ENCODE measurements at regions of chr12 and their contacts with region 1.

Region 1: DNA sequence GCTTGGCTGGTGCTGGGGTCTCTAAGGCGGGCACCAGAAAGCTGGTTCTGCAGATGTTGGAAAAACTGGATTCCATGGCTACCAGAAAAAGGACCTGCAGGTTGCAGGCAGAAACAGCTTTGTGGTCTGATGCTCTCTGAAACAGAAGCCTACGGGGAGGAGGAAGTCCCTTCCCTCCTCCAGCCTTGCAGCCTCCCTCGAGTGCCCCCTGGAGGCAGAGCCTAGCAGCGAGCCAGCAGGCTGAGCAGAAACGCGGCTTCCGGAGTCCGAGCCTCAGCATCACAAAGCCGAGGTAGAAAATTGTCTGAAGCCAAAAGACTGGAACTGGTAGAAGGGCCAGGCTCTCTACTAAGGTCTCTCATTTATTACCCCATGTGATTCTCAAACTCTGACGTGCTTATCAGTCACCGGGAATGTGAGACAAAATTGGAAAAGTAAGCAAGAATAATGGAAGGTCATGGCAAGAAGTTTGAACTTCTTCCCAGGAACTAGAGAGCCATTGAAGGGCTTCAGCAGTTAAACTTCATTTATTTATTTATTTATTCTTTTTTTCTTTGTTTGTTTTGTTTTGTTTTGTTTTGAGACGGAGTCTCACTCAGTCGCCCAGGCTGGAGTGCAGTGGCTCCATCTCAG is 82.2 kb upstream of the CPSF6 start:
- DNase-seq: peak; percentile 97
- ATAC-seq: peak; percentile 83
- H3K4me3 Mint-ChIP-seq: peak overlapping the region; percentile 42
- H3K27ac Mint-ChIP-seq: peak overlapping the region; percentile 58
- H3K4me1 Mint-ChIP-seq: peaks cover 55% of the 10 kb centered on the region
- H3K27me3 Mint-ChIP-seq: no peaks in the 10 kb centered on the region

Region 2: GRCh38 chr12:69239352-69239921 is 82.3 kb after region 1 on chr12 and contains the start of gene CPSF6:
- CTCF ChIA-PET with region 1: interaction called, 30 read pairs
- POLR2A ChIA-PET with region 1: no interaction called
- intact Hi-C with region 1: loop called (anchors 1 kb)
- DNase-seq: peak; percentile 99
- ATAC-seq: peak; percentile 90
- H3K4me3 Mint-ChIP-seq: peak within 1 kb of the TSS; percentile 100
- H3K27ac Mint-ChIP-seq: peak within 1 kb of the TSS; percentile 99
- H3K4me1 Mint-ChIP-seq: peaks cover 48% of the 10 kb centered on the region
- H3K27me3 Mint-ChIP-seq: no peaks in the 10 kb centered on the region
- total RNA-seq, gene CPSF6: 107 to 109 TPM

Region 3: DNA sequence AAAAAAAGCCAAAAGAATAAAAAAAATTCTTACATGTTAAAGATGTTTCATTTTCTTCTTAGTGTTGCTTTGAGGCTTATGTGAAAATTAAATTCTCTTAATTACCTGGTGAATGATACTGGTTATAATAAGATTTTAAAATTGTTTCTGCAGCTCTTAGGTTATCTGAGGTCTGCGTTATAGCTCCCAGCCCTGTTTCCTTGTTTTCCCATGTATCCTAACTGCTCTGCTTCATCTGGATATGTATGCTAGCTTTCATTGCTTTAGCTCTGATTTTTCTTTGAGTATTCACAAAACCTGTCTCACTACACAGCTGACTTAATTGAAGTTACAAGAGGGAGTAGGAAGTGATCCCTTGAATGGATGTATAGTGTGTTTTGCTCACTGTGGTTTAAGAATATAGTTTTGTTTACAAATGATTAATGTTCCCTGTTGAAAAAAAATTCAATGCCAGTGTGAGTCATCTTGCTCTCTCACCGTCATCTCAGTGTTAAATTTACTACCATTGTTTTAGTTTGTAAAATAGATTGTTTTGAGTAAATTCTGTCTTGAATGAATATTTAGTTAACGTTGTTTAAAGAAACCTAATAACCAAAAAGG is 109.0 kb after region 1 on chr12:
- CTCF ChIA-PET with region 1: interaction called, 26 read pairs
- POLR2A ChIA-PET with region 1: no interaction called
- intact Hi-C with region 1: no loop called
- DNase-seq: no peak
- ATAC-seq: peak; percentile 68
- H3K4me3 Mint-ChIP-seq: no peak overlapping the region
- H3K27ac Mint-ChIP-seq: peak overlapping the region; percentile 1
- H3K4me1 Mint-ChIP-seq: peaks cover 16% of the 10 kb centered on the region
- H3K27me3 Mint-ChIP-seq: no peaks in the 10 kb centered on the region

Region 4: GRCh38 chr12:69470189-69471075 is 313.3 kb after region 1 on chr12 and contains the start of gene FRS2:
- CTCF ChIA-PET with region 1: no interaction called
- POLR2A ChIA-PET with region 1: no interaction called
- intact Hi-C with region 1: loop called in 1 of 2 experiments (anchors 5 kb)
- DNase-seq: peak; percentile 93
- ATAC-seq: peak; percentile 99
- H3K4me3 Mint-ChIP-seq: peak within 1 kb of the TSS; percentile 92
- H3K27ac Mint-ChIP-seq: peak within 1 kb of the TSS; percentile 99
- H3K4me1 Mint-ChIP-seq: peaks cover 52% of the 10 kb centered on the region
- H3K27me3 Mint-ChIP-seq: no peaks in the 10 kb centered on the region
- total RNA-seq, gene FRS2: 9.5 to 10.4 TPM

Region 5: DNA sequence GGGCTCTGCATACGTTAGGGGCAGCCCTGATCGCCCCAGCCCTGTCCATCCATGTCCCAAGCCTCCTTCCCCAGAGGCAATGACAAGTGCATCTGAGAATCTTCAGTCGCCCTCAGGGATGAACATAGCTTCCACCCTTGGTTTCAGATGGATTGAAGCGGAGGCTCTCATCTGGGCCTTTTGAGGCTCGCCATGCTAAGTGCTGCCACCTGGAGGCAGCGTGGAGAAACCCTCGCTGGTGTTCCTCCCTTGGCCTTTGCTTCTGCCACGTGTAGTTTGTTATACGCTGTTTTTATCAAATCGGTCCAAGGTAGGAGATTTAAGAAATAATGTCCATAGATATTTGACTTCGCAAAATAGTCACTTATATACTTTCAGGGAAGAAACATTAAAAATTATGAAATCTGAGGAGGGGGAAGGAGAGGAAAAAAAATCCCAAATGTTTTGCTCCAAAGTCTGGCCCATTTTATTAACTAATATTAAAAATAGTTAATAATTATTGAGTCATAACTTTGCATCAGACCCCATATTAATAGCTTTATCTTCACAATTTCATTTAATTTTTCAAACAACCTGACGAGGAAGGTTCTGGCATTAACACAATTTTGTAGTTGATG is 482.4 kb after region 1 on chr12:
- CTCF ChIA-PET with region 1: interaction called, 3 read pairs
- POLR2A ChIA-PET with region 1: no interaction called
- intact Hi-C with region 1: loop called in 1 of 2 experiments (anchors 5 kb)
- DNase-seq: peak; percentile 79
- ATAC-seq: peak; percentile 88
- H3K4me3 Mint-ChIP-seq: no peak overlapping the region
- H3K27ac Mint-ChIP-seq: no peak overlapping the region
- H3K4me1 Mint-ChIP-seq: no peaks in the 10 kb centered on the region
- H3K27me3 Mint-ChIP-seq: no peaks in the 10 kb centered on the region